ENCODE measurements at regions of chr3 and their contacts with region 1.

Region 1: GRCh38 chr3:40464339-40465110 is 7.4 kb downstream of the RPL14 start:
- DNase-seq: peak; percentile 29
- ATAC-seq: peak; percentile 69
- H3K4me3 Mint-ChIP-seq: no peak overlapping the region
- H3K27ac Mint-ChIP-seq: peak overlapping the region; percentile 78
- H3K4me1 Mint-ChIP-seq: peaks cover 32% of the 10 kb centered on the region
- H3K27me3 Mint-ChIP-seq: no peaks in the 10 kb centered on the region
- CTCF ChIP-seq: no peak

Region 2: GRCh38 chr3:40379674-40380306 is 84.7 kb before region 1 on chr3:
- CTCF ChIA-PET with region 1: no interaction called
- POLR2A ChIA-PET with region 1: no interaction called
- intact Hi-C with region 1: no loop called
- DNase-seq: no peak
- ATAC-seq: peak; percentile 47
- H3K4me3 Mint-ChIP-seq: no peak overlapping the region
- H3K27ac Mint-ChIP-seq: no peak overlapping the region
- H3K4me1 Mint-ChIP-seq: peaks cover 7% of the 10 kb centered on the region
- H3K27me3 Mint-ChIP-seq: peaks cover 7% of the 10 kb centered on the region
- CTCF ChIP-seq: no peak

Region 3: DNA sequence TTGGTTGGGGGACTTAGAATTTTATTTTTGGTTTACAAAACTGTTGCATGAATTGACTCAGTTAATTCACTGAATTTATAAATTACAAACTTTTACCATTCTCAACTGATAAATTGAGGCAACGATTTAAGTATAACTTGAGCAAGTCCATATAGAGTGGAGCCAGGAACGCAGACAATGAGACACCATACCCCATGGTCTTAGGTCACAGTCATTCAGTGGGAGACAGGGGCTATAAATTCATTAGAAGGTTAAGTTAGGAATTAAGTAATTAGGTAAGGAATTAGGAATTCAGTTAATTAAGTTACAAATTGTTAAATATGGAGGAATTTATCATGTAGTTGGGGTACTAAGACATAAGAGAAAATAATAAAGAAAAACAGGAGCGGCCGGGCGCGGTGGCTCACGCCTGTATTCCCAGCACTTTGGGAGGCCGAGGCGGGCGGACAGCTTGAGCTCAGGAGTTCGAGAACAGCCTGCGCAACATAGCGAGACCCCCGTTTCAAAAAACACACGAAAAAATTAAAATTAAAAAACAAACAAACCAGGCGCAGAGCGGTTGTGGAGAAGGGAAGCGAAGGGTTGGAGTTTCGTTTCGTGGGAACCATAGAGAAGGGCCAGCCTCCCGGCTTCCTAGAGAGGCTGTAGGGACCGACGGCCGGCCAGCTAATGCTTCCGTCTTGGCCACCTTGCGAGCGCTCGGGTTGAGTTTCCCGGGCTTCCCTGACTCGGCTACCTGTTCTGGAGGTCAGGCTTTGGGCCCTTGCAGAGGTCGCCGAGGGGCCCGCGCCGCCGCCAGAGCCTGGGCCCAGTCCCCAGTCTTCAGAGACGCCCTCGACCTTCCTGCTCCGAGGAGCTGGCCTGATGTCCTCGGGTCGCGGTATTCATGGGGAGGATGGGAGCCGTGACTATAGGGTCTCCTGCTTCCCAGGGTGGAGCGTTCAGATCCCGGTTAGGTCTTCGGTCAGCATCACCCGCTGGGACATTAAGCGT is 12.2 kb after region 1 on chr3 and contains the start of gene ZNF619:
- CTCF ChIA-PET with region 1: no interaction called
- POLR2A ChIA-PET with region 1: interaction called, 26 read pairs
- intact Hi-C with region 1: no loop called
- DNase-seq: peak; percentile 60
- ATAC-seq: peak; percentile 87
- H3K4me3 Mint-ChIP-seq: peak within 1 kb of the TSS; percentile 82
- H3K27ac Mint-ChIP-seq: peak within 1 kb of the TSS; percentile 87
- H3K4me1 Mint-ChIP-seq: peaks cover 19% of the 10 kb centered on the region
- H3K27me3 Mint-ChIP-seq: no peaks in the 10 kb centered on the region
- CTCF ChIP-seq: no peak
- total RNA-seq, gene ZNF619: 5.7 to 6.3 TPM

Region 4: GRCh38 chr3:40690749-40691451 is 226.4 kb after region 1 on chr3:
- CTCF ChIA-PET with region 1: no interaction called
- POLR2A ChIA-PET with region 1: no interaction called
- intact Hi-C with region 1: no loop called
- DNase-seq: no peak
- ATAC-seq: no peak
- H3K4me3 Mint-ChIP-seq: no peak overlapping the region
- H3K27ac Mint-ChIP-seq: no peak overlapping the region
- H3K4me1 Mint-ChIP-seq: no peaks in the 10 kb centered on the region
- H3K27me3 Mint-ChIP-seq: peaks cover 15% of the 10 kb centered on the region
- CTCF ChIP-seq: no peak

Measured in activated CD8-positive, alpha-beta T cell treated with anti-CD3 and anti-CD28 coated beads for 36 hours (primary cell).